ENCODE measurements at regions of chr14 and their contacts with region 1.

Region 1: GRCh38 chr14:68951042-68951914 is 27.8 kb downstream of the ACTN1 start:
- DNase-seq: peak; percentile 99
- H3K4me3 ChIP-seq: peak overlapping the region in 3 of 4 donors; percentile 35 to 41 (median 40)
- H3K27ac ChIP-seq: peak overlapping the region; percentile 98 to 100 (median 100)
- H3K4me1 ChIP-seq: peaks cover 0 to 99% (median 98%) of the 10 kb centered on the region in 4 donors
- H3K27me3 ChIP-seq: no peaks in the 10 kb centered on the region
- CTCF ChIP-seq: no peak
- EP300 ChIP-seq: peak in 2 of 4 donors; percentile 23 to 63
- POLR2A ChIP-seq: no peak

Region 2: GRCh38 chr14:68939893-68940613 is 11.2 kb before region 1 on chr14:
- intact Hi-C with region 1: loop called (anchors 2 kb)
- DNase-seq: peak; percentile 92
- H3K4me3 ChIP-seq: peak overlapping the region in 1 of 4 donors; percentile 16
- H3K27ac ChIP-seq: peak overlapping the region; percentile 98 to 100 (median 100)
- H3K4me1 ChIP-seq: peaks cover 0 to 100% (median 99%) of the 10 kb centered on the region in 4 donors
- H3K27me3 ChIP-seq: no peaks in the 10 kb centered on the region
- CTCF ChIP-seq: no peak
- EP300 ChIP-seq: peak in 1 of 4 donors; percentile 73
- POLR2A ChIP-seq: peak in 1 of 2 donors; percentile 22

Measured in sigmoid colon (tissue), 7 donors.